Transverse colon (tissue), 4 donors: ENCODE measurements at regions of chr18 and their contacts with region 1.

Region 1: GRCh38 chr18:57141208-57142129 is 5.4 kb upstream of the BOD1L2 start:
- DNase-seq: peak; percentile 85
- H3K4me3 ChIP-seq: no peak overlapping the region
- H3K27ac ChIP-seq: no peak overlapping the region
- H3K4me1 ChIP-seq: peaks cover 0 to 5% (median 0%) of the 10 kb centered on the region in 4 donors
- H3K27me3 ChIP-seq: no peaks in the 10 kb centered on the region
- CTCF ChIP-seq: no peak
- EP300 ChIP-seq: no peak
- POLR2A ChIP-seq: no peak

Region 2: DNA sequence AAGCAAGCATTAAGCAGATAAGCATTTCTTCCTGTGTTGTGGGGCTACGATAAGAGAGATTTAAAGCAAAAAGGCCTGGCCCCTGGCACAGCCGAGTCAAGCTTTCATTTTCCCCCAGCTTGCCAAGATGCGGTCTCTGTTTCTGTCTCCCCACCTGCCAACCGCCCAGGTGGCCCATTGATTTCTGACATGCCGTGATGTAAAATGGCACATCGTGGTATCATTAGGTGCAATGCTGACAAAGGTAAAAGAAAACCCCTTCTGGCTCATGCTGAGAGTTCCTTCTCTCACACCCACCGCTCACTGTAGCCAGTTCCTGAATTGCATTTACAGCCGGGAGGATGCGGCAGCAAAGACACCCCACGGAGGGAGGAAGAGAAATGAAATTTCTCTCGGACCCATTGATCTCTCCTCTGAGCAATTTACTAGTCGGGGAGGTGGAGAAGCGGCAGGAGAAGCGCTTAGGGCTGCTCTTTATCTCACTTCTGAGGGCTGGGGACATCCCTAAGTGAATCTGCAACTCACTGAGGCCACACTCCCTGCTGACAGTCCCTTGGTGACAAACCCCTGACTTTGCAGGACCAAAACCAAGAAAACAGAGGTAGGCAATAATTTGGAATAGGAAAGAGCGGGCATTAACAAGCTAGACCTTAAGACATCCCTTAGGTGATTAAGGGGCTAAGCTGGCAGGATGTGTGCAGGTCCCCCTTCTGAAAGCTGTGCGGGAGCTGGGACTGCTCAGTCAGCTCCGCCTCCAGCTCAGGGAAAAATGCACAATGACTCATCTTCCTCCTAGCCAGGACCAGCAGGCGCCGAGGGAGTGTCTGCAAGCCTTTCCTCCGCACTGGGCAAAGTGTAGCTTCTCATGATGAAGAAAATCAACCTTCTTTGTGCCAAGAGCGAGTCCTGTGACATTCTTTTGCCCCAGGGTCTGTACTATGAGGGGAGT is 68.5 kb after region 1 on chr18:
- in situ Hi-C with region 1: loop called in 1 of 4 experiments (anchors 10 kb)
- intact Hi-C with region 1: no loop called
- DNase-seq: peak; percentile 68
- H3K4me3 ChIP-seq: peak overlapping the region in 1 of 4 donors; percentile 12
- H3K27ac ChIP-seq: peak overlapping the region in 3 of 4 donors; percentile 8 to 39 (median 23)
- H3K4me1 ChIP-seq: peaks cover 0 to 18% (median 8%) of the 10 kb centered on the region in 4 donors
- H3K27me3 ChIP-seq: no peaks in the 10 kb centered on the region
- CTCF ChIP-seq: no peak
- EP300 ChIP-seq: no peak
- POLR2A ChIP-seq: no peak